Aorta (tissue), 5 donors: ENCODE measurements at regions of chr3 and their contacts with region 1.

Region 1: DNA sequence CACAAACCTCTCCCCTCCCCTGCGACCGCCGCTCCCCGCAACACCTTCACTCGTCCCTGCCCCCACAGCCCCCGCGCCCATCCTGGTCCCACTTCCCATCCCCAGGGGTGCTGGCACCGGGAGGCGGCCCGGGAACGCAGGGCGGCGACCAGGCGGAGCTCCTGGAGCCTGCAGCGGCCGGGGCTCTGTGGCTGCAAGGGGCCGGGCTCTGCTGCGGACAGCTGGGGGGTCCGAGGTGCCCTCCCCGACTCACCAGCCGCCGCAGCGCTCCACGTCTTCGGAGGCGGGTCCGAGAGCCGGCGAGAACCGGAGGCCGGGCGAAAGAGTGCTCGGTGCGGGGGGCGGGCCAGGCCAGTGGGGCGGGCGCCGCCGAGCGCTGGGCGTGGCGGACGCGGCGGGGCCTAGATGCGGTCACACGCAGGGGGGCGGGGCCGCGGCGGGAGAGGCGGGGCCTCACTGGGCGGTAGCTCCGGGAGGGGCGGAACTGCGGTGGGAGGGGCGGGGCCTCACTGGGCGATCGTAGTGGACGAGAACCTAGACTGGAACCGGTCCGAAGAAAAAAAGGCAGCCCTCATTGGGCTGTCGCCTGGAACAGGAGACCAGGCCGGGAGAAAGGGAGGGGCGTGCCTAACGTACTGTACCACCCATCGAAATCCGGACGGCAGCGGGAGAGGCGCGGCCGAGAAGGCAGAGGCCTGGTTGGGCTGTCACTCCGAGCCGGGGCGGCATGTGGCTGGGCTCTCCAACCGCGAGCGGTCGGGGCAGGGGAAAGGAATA is at the start of gene ANO10:
- DNase-seq: peak; percentile 99 to 100
- ATAC-seq: peak; percentile 100
- H3K4me3 ChIP-seq: peak within 1 kb of the TSS; percentile 75 to 76
- H3K27ac ChIP-seq: peak within 1 kb of the TSS; percentile 90 to 94
- H3K4me1 ChIP-seq: peaks cover 0 to 2% of the 10 kb centered on the region in 2 donors
- H3K27me3 ChIP-seq: no peaks in the 10 kb centered on the region
- total RNA-seq, gene ANO10: 42.6 to 46.8 TPM

Region 2: DNA sequence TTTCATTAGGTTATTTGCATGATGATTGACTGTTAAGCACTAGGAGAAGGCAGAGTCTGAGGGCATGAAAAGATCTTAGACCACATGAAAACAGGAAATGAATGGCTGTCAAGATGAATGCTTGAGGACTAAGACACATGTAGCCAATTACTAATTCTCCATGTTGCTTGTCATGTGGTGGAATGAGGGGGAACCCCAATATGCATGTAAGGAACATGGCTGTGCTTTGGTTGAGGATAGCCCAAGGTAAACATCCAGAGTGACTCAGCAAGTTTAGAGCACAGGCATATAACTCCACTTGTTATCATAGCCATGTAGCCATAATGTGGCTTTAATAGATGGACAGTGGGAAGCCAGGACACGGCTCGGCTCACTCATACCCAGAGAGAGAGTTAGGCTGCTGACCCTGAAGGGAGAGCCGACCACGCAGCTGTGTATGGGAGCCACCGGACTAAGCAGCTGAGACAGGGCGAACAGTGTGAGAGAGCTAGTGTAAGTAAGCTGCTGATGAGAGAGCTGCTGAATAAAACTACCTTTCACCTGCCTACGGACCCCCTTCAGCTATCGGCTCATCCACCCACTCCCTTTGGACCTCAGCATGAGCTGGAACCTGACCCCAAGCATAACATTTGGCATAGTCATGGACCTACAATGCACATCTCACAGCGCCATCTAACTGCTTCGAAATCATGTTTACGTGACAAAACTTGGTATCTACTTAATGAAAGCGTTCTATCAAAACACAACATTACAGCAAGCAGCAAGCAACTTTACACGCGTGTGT is 37.6 kb before region 1 on chr3:
- intact Hi-C with region 1: loop called in 1 of 2 experiments (anchors 5 kb)
- DNase-seq: no peak
- ATAC-seq: no peak
- H3K4me3 ChIP-seq: no peak overlapping the region
- H3K27ac ChIP-seq: no peak overlapping the region
- H3K4me1 ChIP-seq: peaks cover 0 to 3% of the 10 kb centered on the region in 2 donors
- H3K27me3 ChIP-seq: no peaks in the 10 kb centered on the region